PC-3 (cell line): ENCODE measurements at regions of chr5 and their contacts with region 1.

Region 1: DNA sequence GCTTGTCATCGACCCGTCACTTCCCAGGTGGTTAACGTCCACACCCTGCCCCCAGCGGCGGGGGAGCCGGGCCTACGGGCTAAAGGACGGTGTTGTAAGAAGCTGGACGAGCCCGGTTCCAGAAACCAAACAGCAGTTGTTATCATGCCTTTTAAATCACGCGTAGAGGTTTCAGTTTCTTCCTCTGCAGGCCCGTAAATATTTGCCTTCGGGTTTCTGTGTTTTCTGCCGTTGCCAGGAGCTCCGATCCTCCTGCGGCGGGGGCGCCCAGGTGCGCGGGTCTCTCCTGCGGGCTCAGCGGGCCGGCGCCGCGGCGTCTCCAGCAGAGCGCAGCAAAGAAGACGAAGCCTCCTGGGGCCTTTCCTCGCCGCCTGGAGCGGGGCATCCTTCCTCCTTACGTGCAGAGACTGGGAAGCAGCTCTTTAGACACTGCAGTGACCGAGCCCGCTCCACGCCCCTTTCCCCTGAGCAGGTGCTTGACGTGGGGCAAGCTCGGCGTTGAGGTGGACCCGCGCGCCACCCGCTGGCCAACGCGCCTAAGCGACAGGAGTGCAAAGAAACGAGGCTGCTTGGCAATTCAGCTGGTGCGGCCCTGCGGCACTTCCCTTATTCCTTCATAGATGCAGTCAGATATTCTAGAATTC is 21.8 kb upstream of the TTC1 start:
- DNase-seq: peak; percentile 89
- ATAC-seq: peak; percentile 98
- H3K4me3 ChIP-seq: peak overlapping the region; percentile 69
- H3K27ac ChIP-seq: 0 out of 2 replicates have a peak overlapping the region, but pooled peaks have one; percentile 12
- H3K4me1 ChIP-seq: peaks cover 10% of the 10 kb centered on the region
- H3K27me3 ChIP-seq: no peaks in the 10 kb centered on the region
- CTCF ChIP-seq: peak; percentile 91

Region 2: DNA sequence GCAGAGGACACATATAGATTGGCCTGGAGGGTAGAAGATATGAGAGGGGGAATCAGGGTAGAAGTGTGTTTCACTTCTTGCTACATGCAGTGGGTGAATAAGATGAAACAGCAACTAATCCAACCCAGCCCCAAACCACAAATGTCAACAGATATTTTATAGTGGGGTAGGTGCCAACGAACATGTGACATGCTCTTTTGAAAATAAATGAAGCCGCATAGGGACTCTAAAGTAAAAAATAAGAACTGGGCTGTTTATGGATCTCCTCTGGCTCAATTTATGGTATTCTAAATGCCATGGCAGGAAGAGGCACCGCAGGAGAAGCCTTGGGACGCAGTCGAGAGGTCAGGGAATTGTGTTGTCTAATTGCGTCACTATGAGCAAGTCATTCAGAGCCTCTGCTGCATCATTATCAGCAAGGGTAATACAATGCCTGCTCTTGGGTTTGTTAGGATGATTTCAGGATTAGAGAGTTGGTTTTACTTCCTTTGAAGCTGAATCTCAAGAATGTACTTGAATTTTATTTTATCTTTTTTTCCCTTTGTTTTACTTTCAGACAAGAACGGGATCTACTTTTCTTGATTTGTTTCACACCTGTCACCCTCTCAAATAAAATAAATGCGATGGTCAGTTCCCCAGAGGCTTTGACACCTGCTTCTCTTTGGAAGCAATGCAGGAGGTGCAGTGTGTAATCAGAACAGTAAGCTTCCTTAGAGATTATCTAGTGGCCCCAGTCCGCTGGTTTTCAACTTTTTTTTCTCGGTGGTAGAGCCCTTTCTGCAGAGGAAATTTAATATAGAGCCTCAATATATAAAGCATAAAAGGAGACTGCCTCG is 1752.6 kb before region 1 on chr5:
- CTCF ChIA-PET with region 1: no interaction called
- POLR2A ChIA-PET with region 1: no interaction called
- intact Hi-C with region 1: no loop called
- DNase-seq: no peak
- ATAC-seq: no peak
- H3K4me3 ChIP-seq: no peak overlapping the region
- H3K27ac ChIP-seq: no peak overlapping the region
- H3K4me1 ChIP-seq: no peaks in the 10 kb centered on the region
- H3K27me3 ChIP-seq: peaks cover 12% of the 10 kb centered on the region; the same call in 1 of the 2 replicates
- CTCF ChIP-seq: no peak

Region 3: GRCh38 chr5:159286420-159287035 is 700.6 kb before region 1 on chr5:
- CTCF ChIA-PET with region 1: interaction called, 3 read pairs
- POLR2A ChIA-PET with region 1: no interaction called
- intact Hi-C with region 1: loop called (anchors 1 kb)
- DNase-seq: peak; percentile 49
- ATAC-seq: no peak
- H3K4me3 ChIP-seq: no peak overlapping the region
- H3K27ac ChIP-seq: no peak overlapping the region
- H3K4me1 ChIP-seq: 0 out of 2 replicates have a peak, but pooled peaks cover 6% of the 10 kb centered on the region
- H3K27me3 ChIP-seq: no peaks in the 10 kb centered on the region
- CTCF ChIP-seq: peak; percentile 64

Region 4: GRCh38 chr5:159444441-159445082 is 542.6 kb before region 1 on chr5:
- CTCF ChIA-PET with region 1: interaction called, 4 read pairs
- POLR2A ChIA-PET with region 1: no interaction called
- intact Hi-C with region 1: loop called (anchors 1 kb)
- DNase-seq: peak; percentile 78
- ATAC-seq: peak; percentile 76
- H3K4me3 ChIP-seq: no peak overlapping the region
- H3K27ac ChIP-seq: no peak overlapping the region
- H3K4me1 ChIP-seq: peaks cover 5% of the 10 kb centered on the region
- H3K27me3 ChIP-seq: no peaks in the 10 kb centered on the region
- CTCF ChIP-seq: peak; percentile 68

Region 5: GRCh38 chr5:159531554-159532105 is 455.5 kb before region 1 on chr5:
- CTCF ChIA-PET with region 1: no interaction called
- POLR2A ChIA-PET with region 1: no interaction called
- intact Hi-C with region 1: loop called (anchors 5 kb)
- DNase-seq: peak; percentile 36
- ATAC-seq: peak; percentile 42
- H3K4me3 ChIP-seq: no peak overlapping the region
- H3K27ac ChIP-seq: no peak overlapping the region
- H3K4me1 ChIP-seq: no peaks in the 10 kb centered on the region
- H3K27me3 ChIP-seq: no peaks in the 10 kb centered on the region
- CTCF ChIP-seq: peak; percentile 48; the same call in 1 of the 2 replicates

Region 6: GRCh38 chr5:159752622-159753275 is 234.4 kb before region 1 on chr5:
- CTCF ChIA-PET with region 1: no interaction called
- POLR2A ChIA-PET with region 1: no interaction called
- intact Hi-C with region 1: loop called (anchors 10 kb)
- DNase-seq: peak; percentile 74
- ATAC-seq: peak; percentile 71
- H3K4me3 ChIP-seq: peak overlapping the region; percentile 32
- H3K27ac ChIP-seq: peak overlapping the region; percentile 87
- H3K4me1 ChIP-seq: peaks cover 56% of the 10 kb centered on the region
- H3K27me3 ChIP-seq: no peaks in the 10 kb centered on the region
- CTCF ChIP-seq: no peak

Region 7: DNA sequence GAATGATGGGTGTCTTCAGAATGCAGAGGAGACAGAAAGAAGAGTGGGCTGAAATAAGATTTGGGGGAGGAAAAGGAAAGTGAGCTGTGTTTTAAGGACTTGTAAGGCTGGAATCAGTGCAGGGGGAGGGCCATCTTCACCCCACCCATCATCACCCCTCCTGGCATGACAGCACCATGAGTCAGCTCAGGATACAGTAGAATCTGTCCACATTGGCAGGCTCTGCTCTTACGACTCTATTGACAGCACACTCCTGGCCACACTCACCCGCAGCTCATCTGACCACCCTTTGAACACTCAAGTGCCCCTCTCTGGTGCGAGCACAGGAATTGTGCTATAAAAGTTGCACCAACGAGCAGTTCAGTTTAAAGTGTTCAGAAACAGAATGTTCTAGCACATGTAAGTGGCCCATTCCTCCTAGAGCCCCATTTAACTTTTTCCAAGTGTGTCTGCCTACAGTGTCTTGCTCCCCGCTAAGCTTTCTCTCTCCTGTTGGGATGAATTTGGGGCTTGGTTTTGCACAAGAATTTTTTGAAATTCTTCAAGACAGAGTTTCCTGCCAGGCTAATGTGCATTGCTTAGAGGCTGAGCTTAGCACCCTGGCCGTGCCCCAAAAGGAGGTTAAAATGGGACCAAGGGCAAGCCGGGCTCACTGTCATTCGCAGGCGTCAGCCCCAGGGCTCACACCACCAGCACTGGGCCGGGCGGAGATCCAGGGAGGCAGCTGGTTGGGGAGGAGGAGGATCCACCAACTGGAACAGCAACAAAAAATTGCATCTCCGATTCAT is 58.8 kb before region 1 on chr5:
- CTCF ChIA-PET with region 1: interaction called, 3 read pairs
- POLR2A ChIA-PET with region 1: no interaction called
- intact Hi-C with region 1: loop called (anchors 5 kb)
- DNase-seq: peak; percentile 90
- ATAC-seq: peak; percentile 100
- H3K4me3 ChIP-seq: no peak overlapping the region; the same call in 1 of the 2 replicates
- H3K27ac ChIP-seq: peak overlapping the region; percentile 21; the same call in 1 of the 2 replicates
- H3K4me1 ChIP-seq: peaks cover 17% of the 10 kb centered on the region
- H3K27me3 ChIP-seq: no peaks in the 10 kb centered on the region
- CTCF ChIP-seq: no peak